ENCODE measurements at regions of chr10 and their contacts with region 1.

Region 1: GRCh38 chr10:73772280-73773151 is 9.3 kb upstream of the CHCHD1 start:
- DNase-seq: peak; percentile 72 to 88 (median 82)
- H3K4me3 ChIP-seq: peak overlapping the region; percentile 92
- H3K4me3 Mint-ChIP-seq: peak overlapping the region; percentile 91 to 98 (median 97)
- H3K27ac ChIP-seq: peak overlapping the region; percentile 90
- H3K27ac Mint-ChIP-seq: peak overlapping the region; percentile 87 to 97 (median 94)
- H3K4me1 ChIP-seq: peaks cover 45% of the 10 kb centered on the region
- H3K4me1 Mint-ChIP-seq: peaks cover 50 to 75% (median 64%) of the 10 kb centered on the region in 3 donors
- H3K27me3 ChIP-seq: no peaks in the 10 kb centered on the region
- H3K27me3 Mint-ChIP-seq: peaks cover 0 to 4% of the 10 kb centered on the region in 2 donors

Region 2: GRCh38 chr10:73743905-73744663 is 28.4 kb before region 1 on chr10 and contains the start of gene SEC24C:
- CTCF ChIA-PET with region 1: interaction called, 22 read pairs
- POLR2A ChIA-PET with region 1: interaction called, 20 read pairs
- DNase-seq: peak; percentile 92 to 97 (median 95)
- H3K4me3 ChIP-seq: peak within 1 kb of the TSS; percentile 61
- H3K4me3 Mint-ChIP-seq: peak within 1 kb of the TSS; percentile 98 to 100 (median 99)
- H3K27ac ChIP-seq: peak within 1 kb of the TSS; percentile 91
- H3K27ac Mint-ChIP-seq: peak within 1 kb of the TSS; percentile 99 to 100 (median 100)
- H3K4me1 ChIP-seq: peaks cover 37% of the 10 kb centered on the region
- H3K4me1 Mint-ChIP-seq: peaks cover 32 to 45% (median 44%) of the 10 kb centered on the region in 3 donors
- H3K27me3 ChIP-seq: no peaks in the 10 kb centered on the region
- H3K27me3 Mint-ChIP-seq: no peaks in the 10 kb centered on the region
- total RNA-seq, gene SEC24C: 93.1 to 95.9 TPM

Region 3: GRCh38 chr10:73759512-73760115 is 12.9 kb before region 1 on chr10:
- CTCF ChIA-PET with region 1: interaction called, 42 read pairs
- POLR2A ChIA-PET with region 1: interaction called, 38 read pairs
- DNase-seq: peak; percentile 49 to 92 (median 79)
- H3K4me3 ChIP-seq: no peak overlapping the region
- H3K4me3 Mint-ChIP-seq: peak overlapping the region; percentile 34 to 90 (median 74)
- H3K27ac ChIP-seq: peak overlapping the region; percentile 72
- H3K27ac Mint-ChIP-seq: peak overlapping the region; percentile 90 to 99 (median 95)
- H3K4me1 ChIP-seq: peaks cover 54% of the 10 kb centered on the region
- H3K4me1 Mint-ChIP-seq: peaks cover 71 to 81% (median 78%) of the 10 kb centered on the region in 3 donors
- H3K27me3 ChIP-seq: no peaks in the 10 kb centered on the region
- H3K27me3 Mint-ChIP-seq: no peaks in the 10 kb centered on the region

Region 4: GRCh38 chr10:73810735-73811465 is 38.4 kb after region 1 on chr10:
- CTCF ChIA-PET with region 1: interaction called, 11 read pairs
- POLR2A ChIA-PET with region 1: interaction called, 7 read pairs
- DNase-seq: peak; percentile 51 to 82 (median 70)
- H3K4me3 ChIP-seq: peak overlapping the region; percentile 64
- H3K4me3 Mint-ChIP-seq: peak overlapping the region; percentile 86 to 96 (median 91)
- H3K27ac ChIP-seq: peak overlapping the region; percentile 92
- H3K27ac Mint-ChIP-seq: peak overlapping the region; percentile 85 to 97 (median 94)
- H3K4me1 ChIP-seq: peaks cover 40% of the 10 kb centered on the region
- H3K4me1 Mint-ChIP-seq: peaks cover 39 to 52% (median 43%) of the 10 kb centered on the region in 3 donors
- H3K27me3 ChIP-seq: no peaks in the 10 kb centered on the region
- H3K27me3 Mint-ChIP-seq: no peaks in the 10 kb centered on the region